Activated B cell treated with CpG ODN at 0.5 μM for 24 hours (primary cell): ENCODE measurements at regions of chr3 and their contacts with region 1.

Region 1: GRCh38 chr3:172476347-172476746 is 28.1 kb upstream of the GHSR start:
- DNase-seq: no peak
- ATAC-seq: no peak
- H3K4me3 Mint-ChIP-seq: no peak overlapping the region
- H3K27ac Mint-ChIP-seq: no peak overlapping the region
- H3K4me1 Mint-ChIP-seq: peaks cover 7% of the 10 kb centered on the region
- H3K27me3 Mint-ChIP-seq: peaks cover 5% of the 10 kb centered on the region
- CTCF ChIP-seq: no peak

Region 2: DNA sequence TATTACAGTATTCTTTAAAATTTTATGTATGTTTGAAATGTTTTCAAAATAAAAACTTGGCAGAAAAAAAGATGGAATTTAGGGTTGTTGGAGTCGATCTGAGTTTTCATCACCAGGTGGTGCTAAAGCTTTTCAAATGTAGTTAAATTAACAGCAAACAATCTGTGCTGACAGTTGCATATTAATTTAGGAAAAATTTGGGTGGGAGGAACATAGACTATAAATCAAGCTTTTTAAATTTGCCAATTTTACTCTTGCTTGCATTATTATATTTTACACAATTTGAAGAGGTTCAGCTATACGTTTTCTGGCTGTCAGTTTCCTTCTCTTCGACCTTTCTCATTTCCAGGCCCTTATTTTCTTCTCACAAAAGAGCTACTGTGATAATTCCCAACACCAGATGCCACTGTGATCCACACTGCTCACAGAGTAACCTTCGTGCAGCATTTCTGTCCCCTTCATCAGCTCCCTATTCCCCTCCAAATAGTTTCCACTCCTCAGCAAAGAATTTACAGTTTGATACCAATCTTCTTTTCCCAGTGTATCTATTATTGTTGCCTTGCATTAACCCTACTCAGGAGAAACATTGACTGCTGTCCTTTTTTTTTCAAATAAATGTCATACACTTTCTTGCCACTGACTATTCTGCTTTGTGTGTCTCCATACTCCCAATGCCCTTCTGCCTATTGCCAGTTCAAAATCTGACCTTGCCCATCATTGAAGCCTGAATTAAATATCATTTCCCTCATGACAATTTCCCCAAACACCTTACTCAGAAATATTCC is 1514.5 kb before region 1 on chr3:
- CTCF ChIA-PET with region 1: no interaction called
- POLR2A ChIA-PET with region 1: no interaction called
- intact Hi-C with region 1: loop called (anchors 5 kb)
- DNase-seq: no peak
- ATAC-seq: no peak
- H3K4me3 Mint-ChIP-seq: no peak overlapping the region
- H3K27ac Mint-ChIP-seq: no peak overlapping the region
- H3K4me1 Mint-ChIP-seq: no peaks in the 10 kb centered on the region
- H3K27me3 Mint-ChIP-seq: peaks cover 4% of the 10 kb centered on the region
- CTCF ChIP-seq: no peak

Region 3: DNA sequence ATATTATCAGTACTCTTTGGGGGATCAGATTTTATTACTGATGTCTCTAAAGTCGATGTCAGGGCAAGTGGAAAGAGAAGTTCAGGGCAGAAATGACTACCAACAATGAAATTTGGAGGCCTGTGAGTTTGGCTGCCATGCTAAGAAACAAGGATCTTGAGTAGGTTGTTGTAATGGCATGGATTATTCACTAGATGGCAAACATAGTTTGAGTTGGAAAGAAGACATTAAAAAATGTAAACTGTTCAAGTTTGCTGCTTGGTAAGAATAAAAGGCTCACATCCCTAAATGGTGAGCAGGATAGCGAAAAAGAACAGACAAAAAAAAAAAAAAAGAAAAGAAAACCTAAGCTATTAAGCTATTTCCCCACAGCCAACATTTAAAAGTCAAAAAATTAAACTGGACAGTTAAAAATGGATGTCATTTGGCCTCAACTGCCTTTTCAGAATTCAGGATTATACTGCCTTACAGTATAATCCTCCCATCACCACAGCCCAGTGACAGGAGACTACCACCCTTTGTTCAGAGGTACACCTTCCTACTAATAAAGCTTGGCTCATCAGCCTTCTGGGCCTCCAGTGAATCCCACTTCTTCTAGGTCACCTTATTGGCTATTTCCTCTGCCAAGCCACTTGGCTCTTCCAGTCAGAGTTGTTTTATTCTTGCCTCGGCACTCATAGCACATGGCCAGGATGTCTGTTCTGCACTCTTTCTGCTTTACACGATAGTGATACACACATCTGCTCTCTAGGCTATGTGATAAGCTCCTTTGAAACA is 829.8 kb before region 1 on chr3:
- CTCF ChIA-PET with region 1: no interaction called
- POLR2A ChIA-PET with region 1: no interaction called
- intact Hi-C with region 1: loop called (anchors 5 kb)
- DNase-seq: no peak
- ATAC-seq: no peak
- H3K4me3 Mint-ChIP-seq: no peak overlapping the region
- H3K27ac Mint-ChIP-seq: no peak overlapping the region
- H3K4me1 Mint-ChIP-seq: no peaks in the 10 kb centered on the region
- H3K27me3 Mint-ChIP-seq: no peaks in the 10 kb centered on the region
- CTCF ChIP-seq: no peak

Region 4: GRCh38 chr3:172367205-172368105 is 108.9 kb before region 1 on chr3:
- CTCF ChIA-PET with region 1: no interaction called
- POLR2A ChIA-PET with region 1: no interaction called
- intact Hi-C with region 1: no loop called
- DNase-seq: no peak
- ATAC-seq: no peak
- H3K4me3 Mint-ChIP-seq: no peak overlapping the region
- H3K27ac Mint-ChIP-seq: no peak overlapping the region
- H3K4me1 Mint-ChIP-seq: no peaks in the 10 kb centered on the region
- H3K27me3 Mint-ChIP-seq: no peaks in the 10 kb centered on the region
- CTCF ChIP-seq: no peak

Region 5: DNA sequence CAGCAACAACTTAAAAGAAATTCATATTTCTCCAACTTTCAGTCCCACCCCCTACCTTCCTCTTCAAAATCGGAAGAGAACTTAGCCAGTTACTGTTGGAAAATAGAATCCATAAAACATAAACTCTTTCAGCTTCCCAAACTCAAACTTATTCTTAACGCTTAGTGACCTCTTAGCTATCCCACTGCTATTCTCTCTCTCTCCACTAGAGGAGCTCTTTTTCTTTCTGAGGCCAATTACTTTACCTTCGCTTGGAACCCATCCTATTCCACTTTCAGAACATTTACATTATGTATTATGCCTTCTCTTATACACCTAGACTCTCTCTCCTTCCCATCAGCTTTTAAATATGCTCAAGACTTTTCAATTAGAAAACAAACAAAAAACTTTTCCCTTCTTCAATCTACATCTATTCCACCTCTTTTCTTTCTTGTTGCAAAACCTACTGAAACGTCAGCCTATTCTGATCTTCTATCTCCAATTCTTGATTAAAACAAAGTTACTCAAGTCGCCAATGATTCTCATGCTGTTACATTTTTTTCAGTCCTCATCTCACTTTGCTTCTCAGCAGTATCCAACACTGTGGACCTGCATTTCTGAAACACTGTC is 14.7 kb before region 1 on chr3:
- CTCF ChIA-PET with region 1: interaction called, 12 read pairs
- POLR2A ChIA-PET with region 1: no interaction called
- intact Hi-C with region 1: loop called (anchors 1 kb)
- DNase-seq: no peak
- ATAC-seq: peak; percentile 61
- H3K4me3 Mint-ChIP-seq: no peak overlapping the region
- H3K27ac Mint-ChIP-seq: no peak overlapping the region
- H3K4me1 Mint-ChIP-seq: no peaks in the 10 kb centered on the region
- H3K27me3 Mint-ChIP-seq: peaks cover 10% of the 10 kb centered on the region
- CTCF ChIP-seq: peak; percentile 92